ENCODE measurements at regions of chr10 and their contacts with region 1.

Region 1: GRCh38 chr10:114024876-114025610 is 18.6 kb upstream of the ADRB1 start:
- DNase-seq: no peak
- H3K4me3 ChIP-seq: no peak overlapping the region
- H3K27ac ChIP-seq: peak overlapping the region; percentile 95
- H3K4me1 ChIP-seq: peaks cover 34% of the 10 kb centered on the region
- H3K27me3 ChIP-seq: no peaks in the 10 kb centered on the region
- CTCF ChIP-seq: no peak
- POLR2A ChIP-seq: no peak

Region 2: GRCh38 chr10:113678690-113679462 is 346.2 kb before region 1 on chr10:
- CTCF ChIA-PET with region 1: interaction called, 4 read pairs
- POLR2A ChIA-PET with region 1: no interaction called
- dilution Hi-C with region 1: no loop called
- intact Hi-C with region 1: loop called (anchors 5 kb)
- DNase-seq: peak; percentile 87
- H3K4me3 ChIP-seq: peak overlapping the region; percentile 77 to 82 (median 78)
- H3K27ac ChIP-seq: peak overlapping the region; percentile 90
- H3K4me1 ChIP-seq: peaks cover 11% of the 10 kb centered on the region
- H3K27me3 ChIP-seq: no peaks in the 10 kb centered on the region
- CTCF ChIP-seq: peak; percentile 73 to 81
- POLR2A ChIP-seq: no peak

Region 3: DNA sequence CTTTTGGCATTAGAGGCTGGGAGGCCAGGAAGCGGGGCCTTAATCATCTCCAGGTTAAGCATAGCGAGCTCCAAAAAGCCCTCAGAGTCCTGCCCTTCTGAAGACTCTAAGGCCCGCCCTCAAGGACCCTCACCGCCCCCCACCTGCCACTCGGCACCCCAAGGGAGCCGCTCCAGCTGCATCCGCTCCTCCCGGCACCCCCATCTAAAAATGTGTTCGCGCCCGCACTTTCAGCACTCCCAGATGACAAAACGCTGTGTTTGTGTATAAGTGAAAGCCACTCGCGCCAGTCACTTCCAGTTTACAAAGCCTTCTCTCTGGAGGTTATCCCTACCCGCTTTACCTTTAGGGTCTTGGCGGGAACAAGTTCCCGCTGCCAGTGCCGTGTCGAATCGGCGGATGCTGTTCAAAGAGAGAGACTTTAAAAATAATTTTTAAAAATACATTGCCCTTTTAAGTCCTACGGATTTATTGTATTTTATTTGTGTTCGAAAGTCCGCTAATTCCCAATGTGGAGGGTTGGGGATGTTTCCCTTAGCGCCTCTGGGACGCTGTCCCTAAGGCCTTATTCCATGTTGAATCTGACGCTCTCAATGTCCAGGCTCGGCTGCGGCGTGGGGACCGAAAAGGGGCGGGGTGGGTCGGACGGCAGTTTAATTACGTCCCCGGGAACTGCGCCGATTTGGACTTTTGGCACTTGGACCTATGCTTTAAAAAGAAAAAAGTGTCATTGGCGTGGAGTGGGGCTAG is 170.9 kb before region 1 on chr10 and contains the starts of genes DCLRE1A and NHLRC2:
- CTCF ChIA-PET with region 1: no interaction called
- POLR2A ChIA-PET with region 1: no interaction called
- dilution Hi-C with region 1: no loop called
- intact Hi-C with region 1: loop called (anchors 1 kb)
- DNase-seq: peak; percentile 84
- H3K4me3 ChIP-seq: peak within 1 kb of the TSS; percentile 87 to 99 (median 87)
- H3K27ac ChIP-seq: peak within 1 kb of the TSS; percentile 96
- H3K4me1 ChIP-seq: peaks cover 43% of the 10 kb centered on the region
- H3K27me3 ChIP-seq: no peaks in the 10 kb centered on the region
- CTCF ChIP-seq: no peak
- POLR2A ChIP-seq: no peak
- total RNA-seq, gene DCLRE1A: 5.4 and 6.7 TPM in 2 replicates
- total RNA-seq, gene NHLRC2: 28.2 and 34.5 TPM in 2 replicates

Region 4: GRCh38 chr10:113930482-113931057 is 94.5 kb before region 1 on chr10:
- CTCF ChIA-PET with region 1: no interaction called
- POLR2A ChIA-PET with region 1: no interaction called
- dilution Hi-C with region 1: no loop called
- intact Hi-C with region 1: loop called (anchors 1 kb)
- DNase-seq: peak; percentile 32
- H3K4me3 ChIP-seq: no peak overlapping the region
- H3K27ac ChIP-seq: peak overlapping the region; percentile 68
- H3K4me1 ChIP-seq: peaks cover 22% of the 10 kb centered on the region
- H3K27me3 ChIP-seq: no peaks in the 10 kb centered on the region
- CTCF ChIP-seq: no peak
- POLR2A ChIP-seq: no peak

Region 5: GRCh38 chr10:113945075-113945686 is 79.9 kb before region 1 on chr10:
- CTCF ChIA-PET with region 1: no interaction called
- POLR2A ChIA-PET with region 1: no interaction called
- dilution Hi-C with region 1: no loop called
- intact Hi-C with region 1: loop called (anchors 2 kb)
- DNase-seq: peak; percentile 46
- H3K4me3 ChIP-seq: no peak overlapping the region
- H3K27ac ChIP-seq: peak overlapping the region; percentile 22
- H3K4me1 ChIP-seq: peaks cover 11% of the 10 kb centered on the region
- H3K27me3 ChIP-seq: no peaks in the 10 kb centered on the region
- CTCF ChIP-seq: no peak
- POLR2A ChIP-seq: no peak